ENCODE measurements at regions of chr9 and their contacts with region 1.

Region 1: DNA sequence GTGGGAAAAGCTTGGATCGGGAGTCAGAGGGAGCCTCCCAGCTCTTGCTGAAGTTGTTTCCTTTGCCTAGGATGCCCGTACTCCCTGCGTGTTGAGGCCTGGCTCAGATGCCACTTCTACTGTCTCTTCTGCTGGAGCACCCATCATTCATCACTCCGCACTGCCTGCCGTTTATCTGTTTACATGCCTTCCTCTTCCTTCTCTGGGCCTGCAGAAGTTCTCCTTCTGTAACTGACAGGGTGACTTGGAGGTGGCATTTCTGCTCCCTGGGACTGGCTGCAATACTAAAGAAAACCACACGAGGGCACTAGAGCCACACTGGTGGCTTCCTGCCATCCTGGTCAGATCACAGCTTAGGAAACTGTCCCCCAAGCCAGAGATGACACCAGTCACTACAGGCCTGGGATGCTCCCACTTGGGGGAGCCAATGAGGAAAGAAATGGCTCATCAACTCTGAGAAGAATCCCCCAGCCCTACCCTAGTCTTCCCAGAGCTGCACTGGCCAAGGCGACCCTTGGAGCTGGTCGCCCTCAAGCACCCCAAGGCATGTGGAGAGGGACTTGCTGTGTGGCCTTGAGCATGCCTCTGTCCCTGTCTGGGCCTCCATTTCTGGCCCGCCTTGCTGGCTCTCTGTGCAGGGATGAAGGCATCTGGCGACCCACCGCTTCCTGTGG is 9.7 kb upstream of the SLC25A51 start:
- DNase-seq: peak; percentile 84
- ATAC-seq: peak; percentile 97
- H3K4me3 ChIP-seq: no peak overlapping the region
- H3K4me3 Mint-ChIP-seq: no peak overlapping the region
- H3K27ac ChIP-seq: no peak overlapping the region
- H3K27ac Mint-ChIP-seq: no peak overlapping the region
- H3K4me1 ChIP-seq: no peaks in the 10 kb centered on the region
- H3K4me1 Mint-ChIP-seq: no peaks in the 10 kb centered on the region
- H3K27me3 ChIP-seq: no peaks in the 10 kb centered on the region
- H3K27me3 Mint-ChIP-seq: no peaks in the 10 kb centered on the region
- CTCF ChIP-seq: peak; percentile 96

Region 2: DNA sequence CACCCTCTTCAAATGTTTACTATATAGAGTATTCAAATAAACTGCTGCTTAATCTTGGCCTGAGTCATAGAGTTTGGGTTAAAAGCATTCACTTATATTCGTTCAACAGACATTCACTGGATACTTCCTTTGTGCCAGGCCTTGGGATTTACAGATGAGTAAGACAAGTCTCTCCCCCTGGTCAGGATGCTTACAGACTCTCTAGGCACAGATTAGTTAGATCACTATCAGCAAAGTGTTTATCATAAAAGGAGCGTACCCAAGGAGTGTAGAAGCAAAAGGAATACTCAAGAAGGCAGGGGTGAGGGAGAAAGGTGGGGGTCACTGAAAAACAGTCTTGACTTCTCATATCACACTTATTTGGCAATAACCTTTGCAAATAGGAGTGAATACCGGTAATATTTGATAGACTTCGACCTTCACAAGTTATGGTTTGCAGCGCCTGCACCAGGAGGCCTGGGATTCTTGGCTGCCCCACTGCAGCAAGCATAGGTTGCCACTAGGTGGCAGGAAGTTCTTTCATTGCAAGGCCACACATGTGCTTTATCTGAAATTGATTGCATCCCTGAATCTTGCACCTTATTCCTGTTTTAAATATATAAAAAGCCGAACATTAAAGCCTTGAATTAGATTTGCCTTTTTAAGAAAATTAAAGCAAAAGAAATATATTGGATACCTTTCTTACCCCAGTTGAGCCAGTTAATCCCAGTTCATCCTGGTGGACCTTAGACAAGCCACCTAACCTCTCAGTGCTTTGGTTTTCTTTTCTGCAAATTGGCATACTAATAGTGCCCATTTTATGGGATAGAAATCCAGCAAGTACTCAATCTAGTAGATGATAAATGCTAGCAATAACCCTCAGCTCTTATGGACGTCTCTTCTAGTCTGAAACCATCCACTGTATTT is 166.5 kb before region 1 on chr9:
- CTCF ChIA-PET with region 1: no interaction called
- POLR2A ChIA-PET with region 1: no interaction called
- intact Hi-C with region 1: loop called (anchors 1 kb)
- DNase-seq: peak; percentile 65
- ATAC-seq: peak; percentile 80
- H3K4me3 ChIP-seq: no peak overlapping the region
- H3K4me3 Mint-ChIP-seq: no peak overlapping the region
- H3K27ac ChIP-seq: no peak overlapping the region
- H3K27ac Mint-ChIP-seq: no peak overlapping the region
- H3K4me1 ChIP-seq: no peaks in the 10 kb centered on the region
- H3K4me1 Mint-ChIP-seq: no peaks in the 10 kb centered on the region
- H3K27me3 ChIP-seq: peaks cover 0 to 5% (median 0%) of the 10 kb centered on the region in 4 experiments
- H3K27me3 Mint-ChIP-seq: no peaks in the 10 kb centered on the region
- CTCF ChIP-seq: peak; percentile 92

Region 3: DNA sequence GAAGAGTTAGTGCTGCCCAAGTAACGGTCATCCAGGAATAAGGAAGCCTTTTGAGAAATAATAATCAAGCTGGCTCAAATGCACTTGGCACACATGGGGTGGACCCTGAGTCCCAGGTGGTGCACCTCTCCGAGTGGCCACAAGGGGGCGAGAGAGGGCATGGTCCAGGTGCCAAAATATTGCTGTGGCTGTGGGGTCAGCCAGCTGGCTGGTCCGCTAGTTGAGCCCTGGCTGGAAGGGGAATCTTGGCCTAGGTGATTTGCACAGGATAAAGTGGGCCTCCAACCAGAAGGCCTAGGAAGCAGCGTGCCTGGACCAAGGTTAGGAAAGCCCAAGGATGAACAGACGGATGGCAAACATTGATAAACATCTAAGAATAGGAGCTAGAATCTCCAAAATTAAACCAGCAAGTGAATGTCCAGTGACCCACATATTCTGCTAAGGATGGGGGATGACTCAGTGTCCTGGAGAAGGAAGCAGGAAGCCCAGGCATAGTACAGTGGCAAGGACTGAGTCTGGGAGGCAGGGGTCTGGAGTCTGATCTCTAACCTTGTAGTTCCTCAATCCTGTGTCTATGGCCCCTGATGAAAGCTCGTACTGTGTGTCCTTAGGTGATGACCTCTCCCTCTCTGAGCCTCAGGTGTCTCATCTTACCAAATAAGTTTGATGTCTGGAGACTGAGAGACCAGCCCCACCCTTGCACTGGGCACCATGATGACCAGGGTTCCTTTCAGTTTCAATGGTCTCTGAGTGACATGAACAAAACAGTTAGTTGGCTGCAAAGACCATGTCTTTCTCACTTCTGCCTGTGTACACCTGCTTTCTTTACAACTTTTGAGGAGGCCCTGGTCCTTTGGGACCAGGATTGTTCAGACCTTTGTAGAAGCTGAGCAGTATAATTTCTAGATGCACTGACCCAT is 174.6 kb after region 1 on chr9:
- CTCF ChIA-PET with region 1: interaction called, 41 read pairs
- POLR2A ChIA-PET with region 1: interaction called, 3 read pairs
- intact Hi-C with region 1: loop called (anchors 1 kb)
- DNase-seq: peak; percentile 68
- ATAC-seq: peak; percentile 80
- H3K4me3 ChIP-seq: no peak overlapping the region
- H3K4me3 Mint-ChIP-seq: no peak overlapping the region
- H3K27ac ChIP-seq: no peak overlapping the region
- H3K27ac Mint-ChIP-seq: no peak overlapping the region
- H3K4me1 ChIP-seq: no peaks in the 10 kb centered on the region
- H3K4me1 Mint-ChIP-seq: no peaks in the 10 kb centered on the region
- H3K27me3 ChIP-seq: peaks cover 0 to 7% (median 0%) of the 10 kb centered on the region in 4 experiments
- H3K27me3 Mint-ChIP-seq: peaks cover 24% of the 10 kb centered on the region
- CTCF ChIP-seq: peak; percentile 98

Region 4: DNA sequence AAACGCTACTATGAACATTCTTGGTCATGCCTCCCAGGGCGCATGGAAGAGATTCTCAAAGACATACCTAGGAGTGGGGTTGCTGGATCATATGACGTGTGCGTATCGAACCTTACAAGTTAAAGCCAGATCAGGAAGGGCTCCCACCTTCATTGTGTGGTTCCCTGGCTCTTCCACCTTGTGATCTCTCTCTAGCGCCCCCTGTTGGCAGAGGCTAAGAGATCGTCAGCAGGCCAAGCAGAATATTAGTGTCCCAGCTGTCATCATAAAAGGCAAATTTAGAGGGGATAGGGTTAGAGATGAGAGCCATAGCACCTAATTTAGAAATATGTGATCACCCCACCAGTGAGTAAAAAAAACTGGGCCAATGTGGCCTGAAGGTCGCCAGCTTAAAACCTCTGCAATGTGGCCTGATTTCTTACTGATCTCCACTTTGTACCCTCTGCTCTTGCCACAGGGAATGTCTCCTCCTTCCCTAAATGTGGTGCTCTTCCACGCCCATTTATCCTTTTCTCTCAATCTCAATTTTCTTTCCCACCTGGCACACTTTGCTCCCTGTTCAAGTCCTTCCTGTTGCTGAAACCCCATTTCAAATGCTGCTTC is 247.1 kb after region 1 on chr9:
- CTCF ChIA-PET with region 1: interaction called, 34 read pairs
- POLR2A ChIA-PET with region 1: no interaction called
- intact Hi-C with region 1: no loop called
- DNase-seq: peak; percentile 52
- ATAC-seq: peak; percentile 45
- H3K4me3 ChIP-seq: no peak overlapping the region
- H3K4me3 Mint-ChIP-seq: no peak overlapping the region
- H3K27ac ChIP-seq: no peak overlapping the region
- H3K27ac Mint-ChIP-seq: no peak overlapping the region
- H3K4me1 ChIP-seq: no peaks in the 10 kb centered on the region
- H3K4me1 Mint-ChIP-seq: no peaks in the 10 kb centered on the region
- H3K27me3 ChIP-seq: peaks cover 0 to 6% (median 2%) of the 10 kb centered on the region in 4 experiments
- H3K27me3 Mint-ChIP-seq: peaks cover 12% of the 10 kb centered on the region
- CTCF ChIP-seq: peak; percentile 82

Region 5: DNA sequence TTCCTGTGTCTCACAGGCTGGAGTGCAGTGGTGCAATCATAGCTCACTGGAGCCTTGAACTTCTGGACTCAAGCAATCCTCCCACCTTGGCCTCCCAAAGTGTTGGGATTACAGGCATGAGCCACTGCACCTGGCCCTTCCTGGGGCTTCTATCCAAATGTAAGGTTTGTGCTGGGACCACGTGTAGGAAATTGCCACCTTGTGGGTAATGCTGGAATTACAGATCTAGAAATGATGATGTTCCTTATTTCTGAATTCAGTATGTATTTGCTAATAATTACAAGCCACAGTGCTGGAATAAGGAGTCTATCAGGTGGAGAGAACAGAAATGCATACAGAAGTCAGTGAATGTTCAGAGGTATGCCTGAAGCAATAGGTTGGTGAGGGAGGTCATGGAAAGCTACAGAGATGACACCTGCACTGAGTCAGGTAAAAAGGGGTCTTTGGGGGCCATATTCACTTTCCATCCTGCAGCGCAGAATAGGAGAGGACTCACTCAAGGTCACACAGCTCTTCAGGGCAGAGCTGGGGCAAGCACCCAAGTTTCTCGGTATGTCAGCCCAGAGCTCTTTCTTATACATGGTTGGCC is 519.4 kb after region 1 on chr9:
- CTCF ChIA-PET with region 1: interaction called, 22 read pairs
- POLR2A ChIA-PET with region 1: no interaction called
- intact Hi-C with region 1: loop called (anchors 1 kb)
- DNase-seq: peak; percentile 52
- ATAC-seq: no peak
- H3K4me3 ChIP-seq: no peak overlapping the region
- H3K4me3 Mint-ChIP-seq: no peak overlapping the region
- H3K27ac ChIP-seq: no peak overlapping the region
- H3K27ac Mint-ChIP-seq: no peak overlapping the region
- H3K4me1 ChIP-seq: peaks cover 0 to 6% of the 10 kb centered on the region in 2 donors
- H3K4me1 Mint-ChIP-seq: no peaks in the 10 kb centered on the region
- H3K27me3 ChIP-seq: peaks cover 0 to 16% (median 0%) of the 10 kb centered on the region in 4 experiments
- H3K27me3 Mint-ChIP-seq: peaks cover 29% of the 10 kb centered on the region
- CTCF ChIP-seq: peak; percentile 78